HEK293T (cell line): ENCODE measurements at regions of chr11 and their contacts with region 1.

Region 1: DNA sequence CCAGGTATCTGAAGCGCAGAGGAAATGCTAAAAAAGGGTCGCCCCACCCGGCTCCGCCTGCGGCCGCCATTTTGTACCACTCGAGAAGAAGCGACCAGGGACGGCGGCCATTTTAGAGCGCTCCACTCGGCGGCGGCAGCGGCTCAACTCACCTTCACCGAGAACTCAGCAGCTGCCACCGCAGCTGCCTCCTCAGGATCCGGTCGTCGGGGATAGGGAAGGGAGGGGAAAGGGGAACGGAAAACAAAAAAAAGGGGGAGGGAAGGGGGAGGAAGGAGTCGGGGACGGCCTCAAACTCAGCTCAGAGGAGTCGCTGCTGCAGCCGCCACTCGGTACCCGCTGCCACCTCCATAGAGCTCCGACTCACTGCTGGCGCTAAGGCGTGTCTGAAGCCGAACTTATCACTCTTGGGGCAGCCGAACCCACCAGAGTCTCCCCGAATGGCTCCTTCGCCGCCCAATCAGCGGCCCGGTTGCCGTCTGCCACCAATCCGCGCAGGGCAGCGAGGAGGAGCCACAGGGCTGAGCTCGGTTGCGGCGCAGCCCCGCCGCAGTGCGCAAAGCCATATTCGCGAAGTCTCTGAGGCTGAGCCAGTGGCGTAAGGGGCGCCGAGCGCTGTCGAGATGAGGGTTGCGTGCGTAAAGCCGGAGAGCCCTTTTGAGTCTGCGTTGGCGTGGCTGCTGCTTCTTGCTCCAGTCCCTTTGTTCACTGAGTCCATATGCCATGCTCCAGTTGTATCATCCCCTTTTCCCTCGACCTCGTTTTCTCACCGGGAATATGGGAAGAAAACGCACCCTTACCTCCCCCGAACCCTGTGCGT is at the start of gene EIF4G2:
- DNase-seq: peak; percentile 97

Region 2: DNA sequence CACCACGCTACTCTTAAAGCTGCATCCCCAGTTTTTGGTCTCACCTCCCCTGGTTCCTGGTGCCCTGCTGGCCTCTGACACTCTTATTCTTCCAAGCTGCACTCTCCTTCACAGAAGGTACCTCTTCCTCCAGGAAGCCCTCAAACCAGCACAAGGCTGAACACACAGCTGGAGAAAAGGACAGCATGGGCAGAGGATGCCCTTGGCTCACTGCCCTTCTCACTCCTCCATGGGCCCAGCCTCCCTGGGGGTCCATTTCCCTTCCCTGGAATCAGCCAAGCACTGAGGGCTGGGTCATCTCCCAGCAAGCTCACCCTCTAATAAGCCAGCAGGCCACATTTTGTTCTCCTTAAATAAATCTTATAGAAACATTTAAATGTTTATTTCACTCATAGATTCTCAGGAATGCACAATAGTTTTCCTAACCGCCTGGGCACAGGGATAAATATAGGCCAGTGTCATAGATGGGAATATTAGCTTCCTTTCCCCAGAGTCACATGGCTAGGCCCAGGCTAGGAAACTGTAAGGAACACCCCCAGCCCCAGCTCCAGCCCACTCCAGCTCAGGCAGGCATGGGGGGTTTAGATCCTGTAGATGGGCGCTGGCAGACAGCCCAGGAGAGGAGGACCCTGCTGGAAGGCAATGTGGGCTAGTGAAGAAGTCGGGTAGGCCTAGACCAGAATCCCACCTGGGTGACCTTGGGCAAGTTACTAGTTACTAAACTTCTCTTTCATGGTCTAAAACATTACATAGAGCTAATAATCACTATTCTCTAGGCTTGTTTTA is 166.7 kb before region 1 on chr11:
- CTCF ChIA-PET with region 1: no interaction called
- POLR2A ChIA-PET with region 1: no interaction called
- DNase-seq: no peak

Region 3: GRCh38 chr11:10762185-10762584 is 46.6 kb before region 1 on chr11:
- CTCF ChIA-PET with region 1: no interaction called
- POLR2A ChIA-PET with region 1: no interaction called
- DNase-seq: no peak

Region 4: DNA sequence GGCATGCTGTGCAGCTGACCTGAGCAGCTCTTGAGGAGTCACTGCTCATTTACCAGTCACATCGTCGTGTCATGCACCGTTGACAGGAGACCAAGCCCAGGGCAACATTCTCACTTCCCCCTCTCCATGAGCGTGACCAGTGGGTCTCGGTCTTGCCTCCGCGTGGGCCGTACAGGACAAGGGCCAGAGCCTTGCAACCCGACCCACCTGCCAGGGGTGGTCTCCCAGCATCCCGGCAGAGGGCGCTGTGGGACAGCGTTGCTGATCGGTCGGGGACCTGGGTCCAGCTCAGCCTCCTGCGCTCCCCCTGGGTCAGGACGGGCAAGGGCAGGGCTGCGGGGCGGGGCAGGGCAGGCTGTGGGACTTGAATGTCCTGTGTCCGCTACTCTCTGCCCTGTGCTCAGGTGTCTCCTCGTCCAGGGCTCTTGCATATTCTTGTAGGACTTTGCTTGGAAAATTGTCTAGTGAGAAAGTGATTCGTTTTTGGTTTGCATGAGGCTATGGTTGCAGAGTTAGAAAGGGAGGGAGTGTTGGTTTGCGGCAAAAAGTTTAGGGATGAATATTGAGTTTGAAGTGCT is 16.3 kb before region 1 on chr11:
- CTCF ChIA-PET with region 1: interaction called, 12 read pairs
- POLR2A ChIA-PET with region 1: interaction called, 63 read pairs
- DNase-seq: peak; percentile 90

Region 5: GRCh38 chr11:10838083-10838482 is 29.3 kb after region 1 on chr11:
- CTCF ChIA-PET with region 1: interaction called, 3 read pairs
- POLR2A ChIA-PET with region 1: interaction called, 24 read pairs
- DNase-seq: no peak

Region 6: GRCh38 chr11:10857709-10858438 is 49.1 kb after region 1 on chr11 and contains the start of gene ZBED5:
- CTCF ChIA-PET with region 1: no interaction called
- POLR2A ChIA-PET with region 1: interaction called, 35 read pairs
- DNase-seq: peak; percentile 92

Region 7: DNA sequence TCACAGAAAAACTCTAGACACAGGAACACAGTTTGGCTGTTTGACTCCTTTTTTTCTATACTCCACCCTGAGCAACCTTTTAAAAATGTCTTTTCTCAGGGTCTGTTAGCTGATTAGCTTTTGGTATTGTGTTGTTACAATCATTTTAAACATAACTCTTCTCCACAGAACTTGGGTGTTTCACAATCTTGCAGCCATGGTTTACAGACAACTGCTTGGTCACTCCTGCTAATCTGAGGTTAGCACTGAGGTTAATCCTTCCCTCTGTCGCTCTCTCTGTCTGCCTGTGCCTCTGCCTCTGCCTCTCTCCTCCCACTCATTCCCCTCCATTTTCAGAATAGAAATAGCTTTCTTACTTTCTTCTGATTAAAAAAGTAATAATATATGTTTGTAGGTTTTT is 111.4 kb after region 1 on chr11:
- CTCF ChIA-PET with region 1: no interaction called
- POLR2A ChIA-PET with region 1: interaction called, 13 read pairs
- DNase-seq: no peak

Region 8: DNA sequence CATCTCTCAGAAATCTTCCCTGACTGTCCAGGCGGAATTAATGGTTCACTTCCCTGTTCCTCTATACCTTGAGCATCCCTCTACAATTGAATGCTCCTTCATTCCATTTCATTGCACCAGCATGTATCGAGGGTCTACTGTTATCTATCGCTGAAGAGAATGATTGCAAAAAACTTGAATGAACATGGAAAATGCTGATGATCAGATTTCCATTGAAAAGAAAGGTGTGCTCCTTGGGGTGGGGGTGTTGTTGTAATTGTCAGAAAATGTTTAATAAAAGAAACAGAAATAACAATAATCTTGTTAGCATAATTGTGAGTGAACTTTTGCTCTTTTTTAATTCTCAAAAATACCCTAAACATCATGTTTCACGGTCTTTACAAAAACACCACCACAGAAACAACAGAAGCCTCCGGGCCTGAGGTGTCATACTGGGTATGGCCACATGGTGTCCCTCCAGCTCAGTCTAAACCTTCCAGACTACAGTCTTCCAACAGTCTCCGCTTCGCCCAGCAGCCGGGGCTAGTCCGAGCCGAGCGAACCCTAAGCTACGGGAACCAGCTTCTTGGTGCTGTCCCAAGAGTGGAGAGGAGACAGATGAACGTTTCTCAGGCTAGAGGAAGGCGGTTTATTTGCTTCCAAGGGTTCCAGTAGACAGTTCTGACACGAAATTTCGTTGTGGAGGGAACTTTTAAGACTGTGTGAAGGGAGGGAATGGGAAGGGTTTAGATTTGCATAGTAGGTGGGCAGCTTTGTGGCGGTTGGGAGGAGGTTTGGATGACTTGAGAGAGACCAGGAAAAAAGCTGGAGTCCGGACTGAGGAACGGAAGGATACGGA is 124.9 kb after region 1 on chr11:
- CTCF ChIA-PET with region 1: no interaction called
- POLR2A ChIA-PET with region 1: interaction called, 40 read pairs
- DNase-seq: peak; percentile 84